Posterior vena cava (tissue), 2 donors: ENCODE measurements at regions of chr22 and their contacts with region 1.

Region 1: DNA sequence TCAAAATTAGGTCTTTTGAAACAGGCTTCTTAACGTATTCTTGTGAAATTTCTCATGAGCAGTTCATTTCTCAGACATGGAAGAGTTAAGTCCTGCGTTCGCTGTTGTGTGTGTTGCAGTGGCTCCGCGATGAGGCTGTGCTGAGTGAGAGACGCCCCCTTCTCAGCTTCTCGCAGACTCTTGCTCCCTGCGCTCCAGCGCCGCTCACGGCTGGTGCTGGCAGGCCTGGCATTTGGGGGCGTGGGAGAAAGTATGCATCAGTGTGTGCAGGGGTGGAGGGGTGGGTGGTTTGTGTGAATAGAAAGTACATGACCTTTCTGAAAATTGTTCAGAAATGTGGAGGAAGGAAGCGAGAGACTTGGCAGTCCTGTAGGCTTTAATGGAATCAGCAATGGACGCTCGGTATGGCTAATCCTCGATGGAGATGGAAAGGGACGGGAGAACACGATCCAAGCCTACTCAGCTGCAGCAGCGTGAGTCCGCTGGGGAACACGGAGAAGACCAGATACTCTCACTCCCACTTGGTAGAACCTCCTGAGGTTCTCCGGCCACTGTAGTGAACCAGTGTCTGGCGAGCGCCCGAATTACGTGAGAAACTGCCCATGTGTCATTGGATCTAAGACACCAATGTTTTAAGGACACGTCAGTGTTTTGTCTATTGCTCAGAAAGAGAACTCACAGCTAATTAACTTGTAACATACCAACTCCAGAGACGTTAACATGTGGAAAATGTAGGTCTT is 5.9 kb downstream of the TAB1 start:
- DNase-seq: peak; percentile 90

Region 2: GRCh38 chr22:39360674-39361413 is 44.7 kb before region 1 on chr22:
- intact Hi-C with region 1: no loop called
- DNase-seq: no peak

Region 3: GRCh38 chr22:39437791-39438704 is 32.5 kb after region 1 on chr22:
- intact Hi-C with region 1: loop called in 1 of 2 experiments (anchors 1 kb)
- DNase-seq: no peak

Region 4: DNA sequence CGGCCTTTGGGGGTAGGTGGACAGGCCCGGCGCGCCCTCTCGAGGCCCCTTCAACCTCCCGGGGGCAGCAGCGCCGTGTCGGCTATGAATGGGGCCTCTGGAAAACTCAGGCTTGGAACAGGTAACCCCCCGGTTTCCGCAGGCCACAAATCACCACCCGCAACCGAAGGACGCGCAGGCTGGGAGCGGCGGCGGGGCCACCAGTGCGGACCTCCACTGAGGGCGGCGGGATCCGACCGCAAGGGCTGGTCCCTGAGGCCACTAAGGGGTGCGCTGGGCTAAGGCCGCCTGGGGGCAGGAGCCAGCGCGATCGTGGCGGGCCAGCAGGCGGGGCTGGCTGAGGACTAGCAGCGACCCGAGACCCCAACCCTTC is 114.2 kb after region 1 on chr22:
- intact Hi-C with region 1: loop called in 1 of 2 experiments (anchors 5 kb)
- DNase-seq: no peak

Region 5: GRCh38 chr22:39994566-39995392 is 589.3 kb after region 1 on chr22 and contains the start of gene FAM83F:
- intact Hi-C with region 1: no loop called
- DNase-seq: no peak
- total RNA-seq, gene FAM83F: 0.42 TPM in 1 of 2 donors, not detected in the other